ENCODE measurements at regions of chr4 and their contacts with region 1.

Region 1: DNA sequence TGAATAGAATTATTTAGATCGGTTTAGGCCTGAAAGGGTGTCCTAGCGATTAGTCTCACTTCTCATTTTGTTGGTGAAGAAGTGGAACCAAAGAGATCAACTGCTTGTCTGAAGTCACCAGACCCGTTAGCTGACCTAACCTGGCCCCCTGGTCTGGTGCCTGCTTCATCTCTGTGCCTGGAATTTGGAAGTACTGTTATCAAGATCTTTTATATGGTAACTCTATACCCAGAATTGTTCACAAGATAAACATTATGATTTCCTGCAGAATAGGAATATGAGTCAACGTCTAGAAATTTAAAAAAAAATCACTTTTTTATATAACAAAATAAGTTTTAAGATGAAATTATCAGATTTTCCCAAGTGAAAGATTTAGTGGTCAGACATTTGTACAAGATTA is 37.2 kb downstream of the LRP2BP start:
- DNase-seq: peak; percentile 21
- ATAC-seq: no peak
- H3K4me3 ChIP-seq: no peak overlapping the region
- H3K4me3 Mint-ChIP-seq: no peak overlapping the region
- H3K27ac ChIP-seq: no peak overlapping the region
- H3K27ac Mint-ChIP-seq: no peak overlapping the region
- H3K4me1 ChIP-seq: no peaks in the 10 kb centered on the region
- H3K4me1 Mint-ChIP-seq: peaks cover 8% of the 10 kb centered on the region
- H3K27me3 ChIP-seq: no peaks in the 10 kb centered on the region
- H3K27me3 Mint-ChIP-seq: no peaks in the 10 kb centered on the region
- CTCF ChIP-seq: no peak

Region 2: DNA sequence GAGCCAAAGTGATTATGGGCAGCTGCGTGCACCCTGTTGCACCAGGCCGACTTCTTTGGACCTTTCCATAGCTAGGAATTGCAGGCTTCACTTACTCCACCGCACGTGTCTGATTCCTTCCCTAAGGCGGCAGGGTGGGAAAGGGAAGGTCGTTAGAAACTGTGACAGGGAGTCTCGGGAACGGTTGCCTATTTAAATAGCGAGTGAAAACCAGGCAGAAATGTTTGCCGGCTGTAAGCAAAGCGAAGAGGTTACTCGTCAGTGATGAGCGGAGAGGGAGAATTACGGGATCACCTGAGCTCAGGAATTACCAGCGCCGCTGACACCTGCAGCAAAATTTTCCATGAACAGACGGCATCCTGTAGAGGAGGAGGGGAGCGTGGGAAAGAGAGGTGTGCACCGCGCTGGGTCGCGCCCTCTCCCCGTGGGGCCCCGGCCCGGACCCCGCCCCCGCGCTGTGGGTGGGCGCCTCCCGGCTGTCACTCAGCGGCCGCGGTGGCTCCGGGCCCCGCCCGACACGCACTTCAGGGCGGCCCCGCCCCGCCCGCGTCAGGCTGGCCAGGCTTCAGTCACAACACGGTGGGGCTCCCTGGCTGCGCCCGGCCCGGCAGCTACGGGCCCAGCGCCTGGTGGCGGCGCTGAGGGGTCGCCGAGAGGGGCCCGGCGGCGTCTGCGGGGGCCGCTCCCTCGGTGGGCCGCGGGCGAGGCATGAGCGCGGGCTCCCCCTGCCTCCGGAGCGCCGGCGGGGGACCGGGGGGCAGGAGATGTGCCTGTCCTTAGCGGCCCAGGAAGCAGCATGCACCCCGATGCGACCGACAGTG is 149.3 kb before region 1 on chr4 and contains the start of gene SNX25:
- CTCF ChIA-PET with region 1: no interaction called
- POLR2A ChIA-PET with region 1: no interaction called
- intact Hi-C with region 1: no loop called
- DNase-seq: peak; percentile 91
- ATAC-seq: peak; percentile 83
- H3K4me3 ChIP-seq: peak within 1 kb of the TSS; percentile 70 to 87 (median 74)
- H3K4me3 Mint-ChIP-seq: peak within 1 kb of the TSS; percentile 99
- H3K27ac ChIP-seq: peak within 1 kb of the TSS; percentile 62 to 73
- H3K27ac Mint-ChIP-seq: peak within 1 kb of the TSS; percentile 97
- H3K4me1 ChIP-seq: peaks cover 56 to 66% of the 10 kb centered on the region in 2 donors
- H3K4me1 Mint-ChIP-seq: peaks cover 65% of the 10 kb centered on the region
- H3K27me3 ChIP-seq: no peaks in the 10 kb centered on the region
- H3K27me3 Mint-ChIP-seq: no peaks in the 10 kb centered on the region
- CTCF ChIP-seq: no peak
- total RNA-seq, gene SNX25: 77.6 and 83.8 TPM in 2 replicates

Region 3: DNA sequence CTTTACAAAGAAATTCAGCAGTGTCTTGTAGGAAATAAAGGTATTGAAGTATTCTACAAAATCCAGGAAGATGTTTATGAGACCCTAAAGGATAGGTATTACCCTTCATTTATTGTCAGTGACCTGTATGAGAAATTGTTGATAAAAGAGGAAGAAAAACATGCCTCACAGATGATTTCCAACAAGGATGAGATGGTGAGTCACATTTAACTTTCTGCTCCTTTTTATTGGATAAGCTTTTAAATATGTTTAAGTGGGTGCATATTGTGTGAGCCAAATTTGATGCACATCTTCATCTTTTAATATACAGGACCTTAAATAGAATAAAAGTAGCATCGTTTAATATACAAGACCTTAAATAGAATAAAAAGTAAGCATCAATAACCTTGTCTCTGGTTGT is 34.9 kb before region 1 on chr4:
- CTCF ChIA-PET with region 1: no interaction called
- POLR2A ChIA-PET with region 1: no interaction called
- intact Hi-C with region 1: loop called (anchors 5 kb)
- DNase-seq: no peak
- ATAC-seq: no peak
- H3K4me3 ChIP-seq: no peak overlapping the region
- H3K4me3 Mint-ChIP-seq: no peak overlapping the region
- H3K27ac ChIP-seq: no peak overlapping the region
- H3K27ac Mint-ChIP-seq: no peak overlapping the region
- H3K4me1 ChIP-seq: no peaks in the 10 kb centered on the region
- H3K4me1 Mint-ChIP-seq: no peaks in the 10 kb centered on the region
- H3K27me3 ChIP-seq: no peaks in the 10 kb centered on the region
- H3K27me3 Mint-ChIP-seq: no peaks in the 10 kb centered on the region
- CTCF ChIP-seq: no peak

Region 4: GRCh38 chr4:185384930-185385331 is 26.4 kb after region 1 on chr4:
- CTCF ChIA-PET with region 1: no interaction called
- POLR2A ChIA-PET with region 1: no interaction called
- intact Hi-C with region 1: no loop called
- DNase-seq: no peak
- ATAC-seq: no peak
- H3K4me3 ChIP-seq: no peak overlapping the region
- H3K4me3 Mint-ChIP-seq: no peak overlapping the region
- H3K27ac ChIP-seq: no peak overlapping the region
- H3K27ac Mint-ChIP-seq: no peak overlapping the region
- H3K4me1 ChIP-seq: peaks cover 0 to 3% of the 10 kb centered on the region in 2 donors
- H3K4me1 Mint-ChIP-seq: peaks cover 9% of the 10 kb centered on the region
- H3K27me3 ChIP-seq: no peaks in the 10 kb centered on the region
- H3K27me3 Mint-ChIP-seq: no peaks in the 10 kb centered on the region
- CTCF ChIP-seq: no peak